ENCODE measurements at regions of chr21 and their contacts with region 1.

Region 1: DNA sequence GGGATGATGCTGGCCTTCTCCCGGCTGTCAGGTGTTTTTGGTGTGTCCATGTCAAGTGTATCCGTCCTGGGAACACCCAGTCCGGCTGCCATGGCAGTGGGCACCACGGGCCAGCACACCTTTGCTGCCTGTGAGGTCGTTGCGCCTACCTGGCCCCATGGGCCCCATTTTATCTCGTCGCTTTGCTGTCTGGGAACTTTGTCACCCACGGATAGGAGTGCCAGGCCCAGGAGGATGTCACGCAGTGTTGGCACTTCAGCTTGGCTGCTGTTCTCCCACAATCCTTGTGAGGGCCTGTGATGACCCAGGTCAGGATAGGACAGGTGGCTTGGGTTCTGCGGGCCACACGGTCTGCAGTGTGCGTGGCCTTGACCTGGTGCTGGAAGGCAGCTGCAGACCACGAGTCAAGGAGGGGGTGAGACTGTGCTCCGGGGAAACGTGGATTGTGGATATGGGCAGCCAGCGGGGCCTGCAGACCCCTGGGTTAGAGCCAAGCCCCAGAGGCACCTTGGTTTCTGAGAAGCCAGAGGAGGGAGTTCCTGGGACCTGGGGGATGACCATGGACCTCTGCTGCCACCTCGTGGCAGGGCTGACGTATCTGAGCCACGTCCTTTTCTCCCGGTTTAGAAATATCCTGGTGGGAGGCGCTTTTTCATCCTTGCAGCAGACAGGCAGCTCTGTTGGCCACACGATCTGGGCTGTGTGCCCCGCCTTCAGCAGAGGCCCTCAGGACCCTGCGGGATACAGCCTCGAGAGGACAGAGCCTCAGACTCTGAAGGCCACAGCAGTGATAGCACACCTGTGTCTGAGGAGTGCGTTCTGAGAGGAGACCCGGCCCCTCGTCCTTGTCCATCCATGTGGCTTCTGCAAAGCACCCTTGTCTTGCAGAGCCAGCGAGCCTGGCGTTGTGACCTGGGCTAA is 161.1 kb upstream of the COL6A1 start:
- DNase-seq: peak; percentile 91
- ATAC-seq: peak; percentile 84
- H3K4me3 ChIP-seq: no peak overlapping the region
- H3K27ac ChIP-seq: no peak overlapping the region; the same call in 1 of the 2 replicates
- H3K4me1 ChIP-seq: peaks cover 16% of the 10 kb centered on the region
- H3K27me3 ChIP-seq: no peaks in the 10 kb centered on the region; the same call in 1 of the 2 replicates
- CTCF ChIP-seq: peak; percentile 98
- POLR2A ChIP-seq: no peak
- RAD21 ChIP-seq: peak; percentile 97

Region 2: GRCh38 chr21:45439161-45439872 is 381.1 kb before region 1 on chr21:
- CTCF ChIA-PET with region 1: no interaction called
- POLR2A ChIA-PET with region 1: no interaction called
- dilution Hi-C with region 1: no loop called
- in situ Hi-C with region 1: no loop called
- intact Hi-C with region 1: loop called (anchors 5 kb)
- DNase-seq: peak; percentile 89
- ATAC-seq: peak; percentile 92
- H3K4me3 ChIP-seq: peak overlapping the region; percentile 10; the same call in 1 of the 2 replicates
- H3K27ac ChIP-seq: peak overlapping the region; percentile 83
- H3K4me1 ChIP-seq: peaks cover 10% of the 10 kb centered on the region
- H3K27me3 ChIP-seq: no peaks in the 10 kb centered on the region
- CTCF ChIP-seq: peak; percentile 98
- POLR2A ChIP-seq: peak; percentile 68
- RAD21 ChIP-seq: peak; percentile 99

Region 3: DNA sequence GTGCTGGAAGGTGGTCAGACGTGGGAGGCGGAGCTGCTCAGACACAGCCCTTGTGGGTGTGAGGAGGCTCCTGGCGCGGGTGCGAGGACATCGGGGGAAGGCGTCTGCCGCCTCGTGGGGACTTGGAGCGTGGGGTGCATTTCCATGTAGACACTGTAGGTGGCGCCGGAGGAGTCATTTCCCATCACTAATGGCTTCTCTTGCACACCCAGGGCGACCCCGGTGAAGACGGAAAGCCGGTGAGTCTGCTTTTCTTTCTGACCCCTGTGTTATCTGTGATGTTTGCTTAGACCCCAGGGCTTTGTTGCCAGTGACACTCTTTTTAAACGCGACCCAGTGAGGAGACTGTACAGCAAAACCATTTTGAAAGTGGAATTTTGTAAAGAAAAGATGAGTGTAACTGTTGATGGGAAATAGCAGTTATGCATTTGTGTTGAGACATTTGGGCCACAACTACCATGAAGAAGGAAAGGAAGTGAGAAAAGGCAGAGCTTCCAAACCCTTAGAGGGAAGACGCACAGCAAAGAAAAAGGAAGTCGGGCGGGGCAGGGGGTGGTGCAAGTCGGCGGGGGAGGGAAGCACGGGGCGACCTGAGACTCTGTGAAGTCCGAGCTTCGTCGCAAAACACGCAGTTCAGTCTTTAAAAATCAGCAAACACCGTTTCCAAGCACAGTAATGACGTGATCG is 342.2 kb before region 1 on chr21:
- CTCF ChIA-PET with region 1: no interaction called
- POLR2A ChIA-PET with region 1: no interaction called
- dilution Hi-C with region 1: no loop called
- in situ Hi-C with region 1: no loop called
- intact Hi-C with region 1: loop called (anchors 5 kb)
- DNase-seq: peak; percentile 49
- ATAC-seq: peak; percentile 87
- H3K4me3 ChIP-seq: no peak overlapping the region
- H3K27ac ChIP-seq: peak overlapping the region; percentile 45; the same call in 1 of the 2 replicates
- H3K4me1 ChIP-seq: peaks cover 10% of the 10 kb centered on the region
- H3K27me3 ChIP-seq: no peaks in the 10 kb centered on the region
- CTCF ChIP-seq: peak; percentile 85
- POLR2A ChIP-seq: no peak
- RAD21 ChIP-seq: peak; percentile 53

Region 4: DNA sequence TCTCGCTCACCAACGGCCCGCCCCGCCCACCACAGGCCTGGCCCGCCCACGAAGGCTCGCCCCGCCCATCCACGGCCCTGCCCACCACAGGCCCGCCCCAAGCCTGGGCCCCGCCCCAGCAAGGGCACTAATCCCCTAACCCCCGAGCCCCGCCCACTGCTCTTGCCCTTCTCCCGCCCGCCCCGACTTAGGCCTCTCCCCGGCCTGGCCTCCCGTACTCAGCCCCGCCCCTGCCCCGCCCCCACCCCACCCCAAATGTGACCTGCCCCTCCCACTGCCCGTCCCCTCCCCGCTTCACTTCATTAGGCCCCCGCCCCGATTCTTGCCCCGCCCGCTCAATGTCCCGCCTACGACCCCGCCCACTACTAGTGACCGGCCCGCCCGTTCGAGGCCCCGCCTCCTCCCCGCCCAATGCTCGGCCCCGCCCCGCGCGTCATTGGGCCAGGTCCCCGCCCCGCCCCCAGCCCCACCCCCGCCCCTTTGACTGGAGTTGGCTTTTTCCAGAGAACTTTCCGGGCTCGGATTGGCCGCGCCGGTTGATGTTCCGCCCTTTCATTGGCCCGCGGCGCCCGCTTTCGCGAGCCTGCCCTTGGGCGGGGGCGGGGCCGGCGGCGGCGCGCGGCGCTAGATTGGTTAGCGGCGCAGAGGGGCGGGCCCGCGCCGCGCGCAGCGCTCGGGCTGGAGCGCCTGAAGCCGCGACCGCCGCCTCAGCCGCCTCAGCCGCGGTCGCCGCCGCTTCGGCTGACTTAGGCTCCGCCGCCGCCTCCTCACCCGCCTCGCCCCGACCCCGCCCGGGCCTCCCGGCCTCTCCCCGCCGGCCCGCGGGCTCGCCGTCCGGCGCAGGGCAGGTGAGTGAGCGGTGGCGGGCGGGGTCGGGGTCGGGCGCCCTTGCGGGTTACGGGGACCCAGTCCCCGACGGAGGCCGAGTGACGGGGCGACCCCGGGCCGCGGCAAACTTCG is 177.1 kb before region 1 on chr21 and contains the start of gene PCBP3:
- CTCF ChIA-PET with region 1: no interaction called
- POLR2A ChIA-PET with region 1: no interaction called
- dilution Hi-C with region 1: no loop called
- in situ Hi-C with region 1: no loop called
- intact Hi-C with region 1: loop called (anchors 5 kb)
- DNase-seq: peak; percentile 89
- ATAC-seq: peak; percentile 86
- H3K4me3 ChIP-seq: peak within 1 kb of the TSS; percentile 72
- H3K27ac ChIP-seq: no peak within 1 kb of the TSS; the same call in 1 of the 2 replicates
- H3K4me1 ChIP-seq: no peaks in the 10 kb centered on the region
- H3K27me3 ChIP-seq: peaks cover 7% of the 10 kb centered on the region; the same call in 1 of the 2 replicates
- CTCF ChIP-seq: no peak
- POLR2A ChIP-seq: peak; percentile 86
- RAD21 ChIP-seq: no peak
- total RNA-seq, gene PCBP3: 2.5 and 2.9 TPM in 2 replicates

Region 5: DNA sequence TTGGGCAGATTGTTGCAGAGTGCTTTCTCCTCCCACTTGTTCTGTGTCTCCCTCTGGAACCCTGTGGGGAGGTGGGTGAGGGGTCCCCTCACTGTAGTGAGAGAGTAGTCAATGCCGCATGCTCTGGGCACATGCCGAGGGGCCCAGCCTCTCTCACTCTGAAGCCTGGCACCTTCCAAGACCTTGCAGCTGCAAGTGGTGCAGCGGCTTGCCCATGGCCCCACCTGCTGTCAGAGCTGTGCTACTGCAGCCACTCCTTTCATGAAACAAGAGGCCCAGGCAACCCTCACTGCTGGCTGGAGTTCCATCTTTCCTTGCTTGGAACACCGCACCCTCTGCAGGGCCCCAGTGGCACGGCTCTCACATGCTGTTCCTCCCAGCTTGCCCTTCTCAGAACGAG is 102.7 kb after region 1 on chr21:
- CTCF ChIA-PET with region 1: interaction called, 3 read pairs
- POLR2A ChIA-PET with region 1: no interaction called
- dilution Hi-C with region 1: no loop called
- in situ Hi-C with region 1: no loop called
- intact Hi-C with region 1: loop called (anchors 1 kb)
- DNase-seq: peak; percentile 75
- ATAC-seq: peak; percentile 89
- H3K4me3 ChIP-seq: no peak overlapping the region
- H3K27ac ChIP-seq: no peak overlapping the region
- H3K4me1 ChIP-seq: peaks cover 13% of the 10 kb centered on the region
- H3K27me3 ChIP-seq: no peaks in the 10 kb centered on the region
- CTCF ChIP-seq: peak; percentile 86
- POLR2A ChIP-seq: no peak
- RAD21 ChIP-seq: peak; percentile 94

Region 6: DNA sequence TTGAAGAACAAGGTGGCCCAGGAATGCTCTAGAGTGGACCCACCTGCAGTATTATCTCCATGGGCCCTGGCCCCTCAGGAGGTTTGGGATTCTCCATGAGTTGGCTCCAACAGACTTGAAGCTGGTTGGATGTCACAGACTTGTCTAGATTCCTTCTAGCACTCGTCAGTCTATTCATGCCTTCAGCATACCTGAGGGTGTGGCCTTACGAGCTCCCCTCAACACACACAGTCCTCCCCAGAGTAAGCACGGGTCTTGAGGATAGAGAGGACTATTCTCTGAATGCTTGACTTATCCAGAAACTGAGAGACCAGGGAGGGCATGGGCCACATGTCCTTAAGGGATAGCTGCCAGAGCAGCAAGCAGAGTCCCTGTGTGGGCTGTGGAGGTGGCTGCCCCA is 115.2 kb after region 1 on chr21:
- CTCF ChIA-PET with region 1: no interaction called
- POLR2A ChIA-PET with region 1: no interaction called
- dilution Hi-C with region 1: no loop called
- in situ Hi-C with region 1: no loop called
- intact Hi-C with region 1: no loop called
- DNase-seq: peak; percentile 63
- ATAC-seq: no peak
- H3K4me3 ChIP-seq: no peak overlapping the region
- H3K27ac ChIP-seq: no peak overlapping the region
- H3K4me1 ChIP-seq: no peaks in the 10 kb centered on the region
- H3K27me3 ChIP-seq: no peaks in the 10 kb centered on the region; the same call in 1 of the 2 replicates
- CTCF ChIP-seq: no peak
- POLR2A ChIP-seq: no peak
- RAD21 ChIP-seq: no peak